Activated CD8-positive, alpha-beta T cell treated with anti-CD3 and anti-CD28 coated beads for 36 hours (primary cell): ENCODE measurements at regions of chr9 and their contacts with region 1.

Region 1: GRCh38 chr9:137423004-137423874 is at the starts of genes EXD3 and NOXA1:
- DNase-seq: peak; percentile 95
- ATAC-seq: peak; percentile 98
- H3K4me3 Mint-ChIP-seq: peak within 1 kb of the TSS; percentile 79
- H3K27ac Mint-ChIP-seq: peak within 1 kb of the TSS; percentile 50
- H3K4me1 Mint-ChIP-seq: peaks cover 9% of the 10 kb centered on the region
- H3K27me3 Mint-ChIP-seq: no peaks in the 10 kb centered on the region
- CTCF ChIP-seq: peak; percentile 76
- total RNA-seq, gene EXD3: 8.1 to 9.0 TPM
- total RNA-seq, gene NOXA1: 0.72 to 0.95 TPM

Region 2: GRCh38 chr9:137444106-137444790 is 21.0 kb after region 1 on chr9:
- CTCF ChIA-PET with region 1: interaction called, 8 read pairs
- POLR2A ChIA-PET with region 1: interaction called, 10 read pairs
- intact Hi-C with region 1: no loop called
- DNase-seq: no peak
- ATAC-seq: no peak
- H3K4me3 Mint-ChIP-seq: no peak overlapping the region
- H3K27ac Mint-ChIP-seq: no peak overlapping the region
- H3K4me1 Mint-ChIP-seq: peaks cover 13% of the 10 kb centered on the region
- H3K27me3 Mint-ChIP-seq: peaks cover 18% of the 10 kb centered on the region
- CTCF ChIP-seq: no peak

Region 3: DNA sequence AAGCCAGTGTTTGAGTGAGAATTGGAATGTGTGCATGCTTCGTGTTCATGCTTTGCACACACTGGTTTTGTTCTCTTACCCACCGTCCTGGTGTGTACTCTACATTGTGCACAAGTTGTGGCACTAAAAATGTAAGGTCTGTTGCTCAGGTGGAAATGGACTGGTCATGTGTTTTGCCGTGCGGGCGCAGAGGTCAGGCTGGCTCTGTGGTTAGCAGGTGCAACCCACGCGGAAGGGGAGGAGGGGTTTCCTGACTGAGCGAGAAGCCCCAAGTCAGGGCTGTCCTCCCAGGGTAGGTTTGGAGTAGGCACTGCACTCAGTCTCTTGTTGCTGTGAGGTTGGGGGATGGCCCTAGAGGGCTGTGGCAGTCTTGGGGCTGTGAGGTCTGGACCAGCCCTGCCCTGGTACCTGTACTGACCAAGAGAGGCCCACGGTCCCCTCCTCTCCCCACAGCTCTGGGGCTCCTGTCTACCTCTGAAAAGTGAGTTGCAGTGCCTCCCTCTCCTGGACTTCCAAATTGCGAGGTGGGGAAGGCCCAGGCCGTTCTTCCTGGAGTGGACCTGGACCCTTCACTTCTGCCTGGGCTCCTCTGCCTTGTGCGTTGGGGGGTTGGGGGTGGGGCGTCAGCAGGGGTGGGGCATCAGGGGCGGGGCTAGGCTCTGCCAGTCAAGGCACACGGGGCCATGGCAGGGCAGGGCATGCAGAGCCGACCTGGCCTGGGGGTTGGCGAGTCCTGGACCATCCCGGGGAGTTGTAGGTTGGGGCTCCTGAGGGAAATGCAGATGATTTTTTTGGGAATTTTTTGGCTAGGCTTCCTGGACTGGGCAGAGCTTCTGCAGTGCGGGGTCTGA is 282.4 kb after region 1 on chr9:
- CTCF ChIA-PET with region 1: no interaction called
- POLR2A ChIA-PET with region 1: no interaction called
- intact Hi-C with region 1: no loop called
- DNase-seq: peak; percentile 78
- ATAC-seq: peak; percentile 90
- H3K4me3 Mint-ChIP-seq: no peak overlapping the region
- H3K27ac Mint-ChIP-seq: peak overlapping the region; percentile 57
- H3K4me1 Mint-ChIP-seq: peaks cover 43% of the 10 kb centered on the region
- H3K27me3 Mint-ChIP-seq: no peaks in the 10 kb centered on the region
- CTCF ChIP-seq: no peak